ENCODE measurements at regions of chr1 and their contacts with region 1.

Region 1: DNA sequence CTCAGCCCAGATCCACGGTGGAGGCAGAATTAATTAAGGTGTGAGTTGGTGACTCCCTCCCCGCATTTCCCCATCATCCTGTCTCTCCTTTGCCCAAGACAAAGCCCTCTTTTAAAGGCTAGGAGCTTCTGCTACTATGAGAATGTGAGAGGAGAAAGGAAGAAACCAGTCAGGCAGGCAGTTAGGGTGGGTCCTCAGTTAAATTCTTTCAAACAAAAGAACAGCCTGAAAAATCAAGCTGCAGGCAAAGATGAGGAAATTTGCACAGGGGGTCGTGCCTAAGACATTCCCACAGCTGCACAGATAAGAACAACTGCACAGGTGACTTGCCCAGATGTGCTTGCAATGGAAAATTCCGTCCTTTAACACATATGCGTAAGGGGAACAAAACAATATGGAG is 47.6 kb downstream of the SERTAD4 start:
- DNase-seq: no peak
- ATAC-seq: no peak
- H3K4me3 ChIP-seq: no peak overlapping the region
- H3K27ac ChIP-seq: no peak overlapping the region
- H3K4me1 ChIP-seq: no peaks in the 10 kb centered on the region
- H3K27me3 ChIP-seq: peaks cover 6% of the 10 kb centered on the region
- CTCF ChIP-seq: no peak
- POLR2A ChIP-seq: no peak
- RAD21 ChIP-seq: no peak

Region 2: DNA sequence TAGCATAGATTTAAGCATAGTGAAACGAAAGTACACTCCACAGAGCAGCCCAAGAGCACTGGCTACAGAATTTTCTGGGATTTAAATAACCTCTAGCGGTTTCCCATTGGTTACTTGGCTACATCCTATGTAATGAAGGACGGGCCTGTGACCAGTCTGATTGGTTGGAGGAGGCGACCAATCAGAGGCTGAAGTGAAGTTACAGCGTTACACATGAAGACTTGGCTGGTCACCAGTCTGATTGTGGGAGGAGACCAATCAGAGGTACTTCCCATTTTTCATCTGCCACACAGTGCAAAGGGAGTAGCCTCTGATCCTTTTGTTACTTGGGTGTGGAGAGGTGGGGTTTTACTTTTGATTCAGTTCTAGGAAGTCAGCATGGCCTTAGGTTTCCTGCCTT is 190.4 kb before region 1 on chr1:
- CTCF ChIA-PET with region 1: no interaction called
- POLR2A ChIA-PET with region 1: no interaction called
- dilution Hi-C with region 1: no loop called
- in situ Hi-C with region 1: no loop called
- intact Hi-C with region 1: no loop called
- DNase-seq: peak; percentile 1
- ATAC-seq: no peak
- H3K4me3 ChIP-seq: no peak overlapping the region
- H3K27ac ChIP-seq: no peak overlapping the region
- H3K4me1 ChIP-seq: no peaks in the 10 kb centered on the region
- H3K27me3 ChIP-seq: no peaks in the 10 kb centered on the region
- CTCF ChIP-seq: no peak
- POLR2A ChIP-seq: no peak
- RAD21 ChIP-seq: no peak

Region 3: DNA sequence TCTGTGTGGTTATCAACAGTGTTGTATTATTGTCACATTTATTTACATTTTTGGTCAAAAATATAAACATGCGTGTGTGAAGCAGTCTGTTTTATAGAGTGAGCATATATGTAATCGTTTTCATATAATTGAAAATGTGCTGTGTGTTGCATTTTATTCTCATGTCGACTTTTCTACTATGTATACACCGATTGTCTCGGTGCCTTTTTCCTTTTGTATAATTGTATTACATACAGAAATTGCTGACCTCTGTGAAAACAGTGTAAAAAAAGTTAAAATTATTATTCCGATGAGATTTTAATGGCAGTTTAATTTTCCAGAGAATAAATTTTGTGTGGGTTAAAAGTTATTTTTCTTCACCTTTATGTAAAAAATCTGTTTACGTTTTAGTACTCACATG is 110.0 kb before region 1 on chr1:
- CTCF ChIA-PET with region 1: no interaction called
- POLR2A ChIA-PET with region 1: interaction called, 14 read pairs
- dilution Hi-C with region 1: no loop called
- in situ Hi-C with region 1: no loop called
- intact Hi-C with region 1: no loop called
- DNase-seq: no peak
- ATAC-seq: no peak
- H3K4me3 ChIP-seq: no peak overlapping the region
- H3K27ac ChIP-seq: no peak overlapping the region
- H3K4me1 ChIP-seq: no peaks in the 10 kb centered on the region
- H3K27me3 ChIP-seq: peaks cover 5% of the 10 kb centered on the region
- CTCF ChIP-seq: no peak
- POLR2A ChIP-seq: no peak
- RAD21 ChIP-seq: no peak

Measured in IMR-90 (cell line).